ENCODE measurements at regions of chr15 and their contacts with region 1.

Region 1: DNA sequence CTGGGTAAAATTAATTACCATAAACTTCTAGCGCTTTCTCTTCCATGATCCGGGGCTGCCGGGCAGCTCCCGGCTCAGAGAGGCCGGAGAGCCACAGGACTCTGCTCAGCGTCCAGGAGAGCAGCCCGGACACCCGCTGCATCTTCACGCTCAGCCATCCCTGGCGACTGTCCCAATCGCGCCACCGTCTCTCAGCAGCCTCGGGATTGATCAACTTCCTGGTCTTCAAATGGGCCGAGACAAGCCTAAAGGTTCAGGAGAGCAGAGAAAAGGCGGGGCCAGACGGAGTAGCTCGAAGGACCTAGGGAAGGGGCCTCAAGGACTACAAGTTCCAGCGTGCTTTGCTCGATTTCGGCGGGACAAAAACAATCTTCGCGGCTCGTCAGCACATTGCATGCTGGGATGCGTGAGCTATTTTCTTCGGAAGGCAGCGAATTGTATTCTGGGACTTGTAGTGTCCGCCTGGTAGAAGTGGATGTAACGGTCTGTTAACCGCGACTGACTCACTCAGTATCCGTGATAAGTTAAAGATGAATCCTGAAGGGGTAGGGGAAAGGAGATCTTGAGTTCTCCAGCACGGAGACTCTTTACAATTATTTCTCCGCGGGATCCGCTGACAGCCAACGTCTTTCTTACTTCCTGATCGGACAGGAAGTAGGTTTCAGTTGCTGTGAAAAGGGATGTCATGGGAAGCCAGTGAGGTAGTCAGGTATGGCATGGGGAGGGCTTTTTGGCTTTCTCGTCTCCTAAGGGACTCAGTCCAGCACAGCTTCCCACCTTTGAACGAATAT is at the start of gene CIAO2A:
- DNase-seq: peak; percentile 98
- H3K4me3 Mint-ChIP-seq: peak within 1 kb of the TSS; percentile 99
- H3K27ac Mint-ChIP-seq: peak within 1 kb of the TSS; percentile 97
- H3K4me1 Mint-ChIP-seq: peaks cover 62% of the 10 kb centered on the region
- H3K27me3 Mint-ChIP-seq: no peaks in the 10 kb centered on the region
- total RNA-seq, gene CIAO2A: 95.4 to 97.4 TPM

Region 2: GRCh38 chr15:63212050-63213004 is 881.5 kb before region 1 on chr15:
- CTCF ChIA-PET with region 1: no interaction called
- POLR2A ChIA-PET with region 1: no interaction called
- intact Hi-C with region 1: loop called (anchors 10 kb)
- DNase-seq: no peak
- H3K4me3 Mint-ChIP-seq: peak overlapping the region; percentile 64
- H3K27ac Mint-ChIP-seq: peak overlapping the region; percentile 97
- H3K4me1 Mint-ChIP-seq: peaks cover 83% of the 10 kb centered on the region
- H3K27me3 Mint-ChIP-seq: no peaks in the 10 kb centered on the region

Region 3: DNA sequence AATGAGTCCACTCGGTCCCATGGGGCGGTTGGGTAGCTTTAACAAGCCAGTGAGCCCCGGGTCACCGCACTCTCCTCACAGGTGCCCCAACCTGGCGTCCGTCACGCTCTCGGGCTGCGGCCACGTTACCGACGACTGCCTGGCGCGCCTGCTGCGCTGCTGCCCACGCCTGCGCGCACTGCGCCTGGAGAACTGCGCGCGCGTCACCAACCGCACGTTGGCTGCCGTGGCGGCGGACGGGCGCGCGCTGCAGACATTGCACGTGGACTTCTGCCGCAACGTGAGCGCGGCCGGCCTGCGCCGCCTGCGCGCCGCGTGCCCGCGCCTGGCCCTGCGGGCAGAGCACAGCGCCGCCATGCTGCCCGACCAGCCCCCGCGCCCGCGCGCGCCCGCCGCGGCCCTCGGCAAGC is 493.2 kb before region 1 on chr15:
- CTCF ChIA-PET with region 1: no interaction called
- POLR2A ChIA-PET with region 1: interaction called, 3 read pairs
- intact Hi-C with region 1: loop called (anchors 10 kb)
- DNase-seq: peak; percentile 93
- H3K4me3 Mint-ChIP-seq: peak overlapping the region; percentile 93
- H3K27ac Mint-ChIP-seq: peak overlapping the region; percentile 96
- H3K4me1 Mint-ChIP-seq: peaks cover 54% of the 10 kb centered on the region
- H3K27me3 Mint-ChIP-seq: no peaks in the 10 kb centered on the region

Region 4: DNA sequence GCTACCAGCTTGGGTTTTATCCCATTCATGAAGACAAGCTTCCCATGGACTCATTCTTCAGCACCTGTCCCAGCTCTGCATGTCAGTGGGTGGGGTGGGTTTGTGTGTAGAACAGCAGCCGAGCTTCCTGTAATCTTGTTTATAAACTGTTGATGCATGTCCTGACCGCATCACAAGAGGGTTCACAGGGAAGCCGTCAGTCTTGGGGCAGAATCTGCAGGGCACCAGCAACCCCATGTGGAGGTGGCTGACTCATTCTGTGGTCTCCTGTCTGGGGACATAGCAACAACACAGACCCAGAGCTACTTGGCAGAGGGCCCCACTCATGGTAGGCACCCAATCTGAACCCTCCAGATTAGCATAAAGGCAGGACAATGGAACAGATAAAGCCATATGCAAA is 83.1 kb before region 1 on chr15:
- CTCF ChIA-PET with region 1: interaction called, 4 read pairs
- POLR2A ChIA-PET with region 1: interaction called, 8 read pairs
- intact Hi-C with region 1: loop called (anchors 2 kb)
- DNase-seq: peak; percentile 92
- H3K4me3 Mint-ChIP-seq: peak overlapping the region; percentile 5
- H3K27ac Mint-ChIP-seq: peak overlapping the region; percentile 83
- H3K4me1 Mint-ChIP-seq: peaks cover 42% of the 10 kb centered on the region
- H3K27me3 Mint-ChIP-seq: no peaks in the 10 kb centered on the region

Region 5: GRCh38 chr15:64153480-64154367 is 59.9 kb after region 1 on chr15:
- CTCF ChIA-PET with region 1: interaction called, 15 read pairs
- POLR2A ChIA-PET with region 1: interaction called, 4 read pairs
- intact Hi-C with region 1: loop called (anchors 1 kb)
- DNase-seq: peak; percentile 94
- H3K4me3 Mint-ChIP-seq: peak overlapping the region; percentile 43
- H3K27ac Mint-ChIP-seq: peak overlapping the region; percentile 10
- H3K4me1 Mint-ChIP-seq: peaks cover 26% of the 10 kb centered on the region
- H3K27me3 Mint-ChIP-seq: peaks cover 14% of the 10 kb centered on the region

Region 6: GRCh38 chr15:64247906-64248541 is 154.2 kb after region 1 on chr15:
- CTCF ChIA-PET with region 1: no interaction called
- POLR2A ChIA-PET with region 1: no interaction called
- intact Hi-C with region 1: loop called (anchors 10 kb)
- DNase-seq: peak; percentile 29
- H3K4me3 Mint-ChIP-seq: no peak overlapping the region
- H3K27ac Mint-ChIP-seq: no peak overlapping the region
- H3K4me1 Mint-ChIP-seq: peaks cover 40% of the 10 kb centered on the region
- H3K27me3 Mint-ChIP-seq: peaks cover 2% of the 10 kb centered on the region